ENCODE measurements at regions of chr2 and their contacts with region 1.

Region 1: DNA sequence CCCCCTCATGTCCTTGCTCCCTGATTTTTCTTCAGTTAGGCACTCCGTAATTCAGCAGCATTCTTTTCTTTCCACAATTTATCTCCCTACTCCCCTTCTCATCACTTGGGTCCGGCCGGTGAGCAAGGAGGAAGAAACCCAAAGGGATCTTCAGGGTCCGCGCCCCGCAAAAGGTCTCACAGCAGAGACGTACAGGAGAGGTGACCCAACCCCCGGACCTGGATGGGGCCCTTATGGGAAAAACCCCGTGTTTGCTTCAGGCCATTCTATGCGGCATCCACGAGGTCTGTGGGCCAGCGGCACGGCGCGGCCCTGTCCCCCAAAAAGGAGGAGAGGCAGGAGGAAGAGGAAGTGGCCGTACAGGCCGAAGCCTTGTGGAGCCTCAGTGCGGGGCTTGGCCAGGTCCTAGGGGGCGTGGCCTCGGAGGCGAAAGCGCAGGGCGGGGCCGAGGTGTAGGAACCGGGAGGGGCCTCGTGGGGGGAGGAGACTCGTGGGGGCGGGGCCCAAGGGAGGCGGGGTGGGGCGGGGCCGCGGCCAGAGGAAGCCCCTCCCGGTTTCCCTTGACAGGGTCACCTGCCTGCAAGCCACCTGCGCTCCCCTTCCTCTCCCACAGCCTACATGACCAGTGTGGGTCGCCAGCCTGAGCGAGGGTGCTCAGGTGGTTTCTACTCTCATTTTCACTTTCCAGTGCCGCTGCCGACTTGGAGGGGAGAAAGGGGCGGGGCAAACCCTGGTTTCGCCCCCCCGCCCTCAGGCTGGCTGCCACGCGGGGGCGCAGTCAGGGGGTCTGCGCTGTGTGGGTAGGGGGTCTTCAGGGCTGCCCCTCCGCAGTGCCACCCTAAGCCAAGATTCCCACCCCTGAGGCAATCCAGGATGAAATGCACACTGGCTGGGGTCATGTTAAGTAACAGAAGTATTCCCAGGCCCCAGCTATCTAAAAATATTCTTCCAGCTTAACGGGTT is 156.4 kb upstream of the XPO1 start:
- DNase-seq: peak; percentile 93
- ATAC-seq: peak; percentile 98
- H3K4me3 Mint-ChIP-seq: peak overlapping the region; percentile 80
- H3K27ac Mint-ChIP-seq: peak overlapping the region; percentile 86
- H3K4me1 Mint-ChIP-seq: peaks cover 14% of the 10 kb centered on the region
- H3K27me3 Mint-ChIP-seq: no peaks in the 10 kb centered on the region

Region 2: GRCh38 chr2:61065715-61066709 is 628.6 kb before region 1 on chr2 and contains the start of gene SANBR:
- CTCF ChIA-PET with region 1: no interaction called
- POLR2A ChIA-PET with region 1: no interaction called
- intact Hi-C with region 1: loop called in 1 of 2 experiments (anchors 1 kb)
- DNase-seq: peak; percentile 90
- ATAC-seq: peak; percentile 99
- H3K4me3 Mint-ChIP-seq: peak within 1 kb of the TSS; percentile 80
- H3K27ac Mint-ChIP-seq: peak within 1 kb of the TSS; percentile 78
- H3K4me1 Mint-ChIP-seq: peaks cover 12% of the 10 kb centered on the region
- H3K27me3 Mint-ChIP-seq: no peaks in the 10 kb centered on the region
- total RNA-seq, gene SANBR: 2.5 to 3.0 TPM

Region 3: GRCh38 chr2:61470965-61471904 is 223.4 kb before region 1 on chr2 and contains the start of gene USP34:
- CTCF ChIA-PET with region 1: no interaction called
- POLR2A ChIA-PET with region 1: no interaction called
- intact Hi-C with region 1: loop called in 1 of 2 experiments (anchors 1 kb)
- DNase-seq: peak; percentile 97
- ATAC-seq: peak; percentile 91
- H3K4me3 Mint-ChIP-seq: peak within 1 kb of the TSS; percentile 83
- H3K27ac Mint-ChIP-seq: peak within 1 kb of the TSS; percentile 94
- H3K4me1 Mint-ChIP-seq: peaks cover 29% of the 10 kb centered on the region
- H3K27me3 Mint-ChIP-seq: no peaks in the 10 kb centered on the region
- total RNA-seq, gene USP34: 63.7 to 67.6 TPM

Region 4: GRCh38 chr2:61733563-61733962 is 39.0 kb after region 1 on chr2:
- CTCF ChIA-PET with region 1: no interaction called
- POLR2A ChIA-PET with region 1: no interaction called
- intact Hi-C with region 1: no loop called
- DNase-seq: no peak
- ATAC-seq: no peak
- H3K4me3 Mint-ChIP-seq: no peak overlapping the region
- H3K27ac Mint-ChIP-seq: no peak overlapping the region
- H3K4me1 Mint-ChIP-seq: no peaks in the 10 kb centered on the region
- H3K27me3 Mint-ChIP-seq: no peaks in the 10 kb centered on the region

Region 5: GRCh38 chr2:61854474-61855182 is 160.0 kb after region 1 on chr2:
- CTCF ChIA-PET with region 1: no interaction called
- POLR2A ChIA-PET with region 1: no interaction called
- intact Hi-C with region 1: loop called in 1 of 2 experiments (anchors 1 kb)
- DNase-seq: peak; percentile 93
- ATAC-seq: peak; percentile 94
- H3K4me3 Mint-ChIP-seq: peak overlapping the region; percentile 99
- H3K27ac Mint-ChIP-seq: peak overlapping the region; percentile 94
- H3K4me1 Mint-ChIP-seq: peaks cover 20% of the 10 kb centered on the region
- H3K27me3 Mint-ChIP-seq: no peaks in the 10 kb centered on the region

Region 6: GRCh38 chr2:61905372-61906185 is 211.0 kb after region 1 on chr2 and contains the start of gene COMMD1:
- CTCF ChIA-PET with region 1: no interaction called
- POLR2A ChIA-PET with region 1: no interaction called
- intact Hi-C with region 1: loop called in 1 of 2 experiments (anchors 5 kb)
- DNase-seq: peak; percentile 93
- ATAC-seq: peak; percentile 99
- H3K4me3 Mint-ChIP-seq: peak within 1 kb of the TSS; percentile 96
- H3K27ac Mint-ChIP-seq: peak within 1 kb of the TSS; percentile 80
- H3K4me1 Mint-ChIP-seq: peaks cover 9% of the 10 kb centered on the region
- H3K27me3 Mint-ChIP-seq: no peaks in the 10 kb centered on the region
- total RNA-seq, gene COMMD1: 29.3 to 36.1 TPM

Region 7: GRCh38 chr2:62705007-62705829 is 1010.6 kb after region 1 on chr2 and contains the start of gene EHBP1:
- CTCF ChIA-PET with region 1: no interaction called
- POLR2A ChIA-PET with region 1: no interaction called
- intact Hi-C with region 1: loop called in 1 of 2 experiments (anchors 10 kb)
- DNase-seq: peak; percentile 99
- ATAC-seq: peak; percentile 95
- H3K4me3 Mint-ChIP-seq: peak within 1 kb of the TSS; percentile 79
- H3K27ac Mint-ChIP-seq: peak within 1 kb of the TSS; percentile 83
- H3K4me1 Mint-ChIP-seq: peaks cover 31% of the 10 kb centered on the region
- H3K27me3 Mint-ChIP-seq: no peaks in the 10 kb centered on the region
- total RNA-seq, gene EHBP1: 27.3 to 28.5 TPM